ENCODE measurements at regions of chr16 and their contacts with region 1.

Region 1: DNA sequence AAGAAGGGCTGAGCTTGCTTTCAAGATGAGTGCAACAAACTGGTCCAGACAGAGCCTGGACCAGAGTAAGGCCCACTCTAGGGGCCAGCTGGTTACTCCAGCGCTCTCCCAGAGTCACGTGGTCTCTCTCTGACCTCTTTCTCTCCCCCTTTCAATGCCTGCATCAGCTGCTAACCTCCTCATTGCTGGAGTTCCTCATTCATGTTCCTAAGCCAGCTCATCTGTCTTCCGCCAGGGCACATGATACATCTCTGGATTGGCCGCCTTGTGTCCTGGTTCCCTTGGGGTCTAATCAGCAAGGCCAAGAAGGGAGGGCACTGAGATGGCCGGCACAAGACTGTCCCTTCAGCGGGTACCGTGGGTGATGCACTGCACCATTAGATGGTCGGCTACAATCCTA is 26.9 kb upstream of the ZFP90 start:
- DNase-seq: no peak
- ATAC-seq: no peak
- H3K4me3 ChIP-seq: no peak overlapping the region
- H3K27ac ChIP-seq: no peak overlapping the region
- H3K4me1 ChIP-seq: no peaks in the 10 kb centered on the region
- H3K27me3 ChIP-seq: peaks cover 20% of the 10 kb centered on the region
- CTCF ChIP-seq: no peak
- POLR2A ChIP-seq: no peak
- RAD21 ChIP-seq: no peak

Region 2: DNA sequence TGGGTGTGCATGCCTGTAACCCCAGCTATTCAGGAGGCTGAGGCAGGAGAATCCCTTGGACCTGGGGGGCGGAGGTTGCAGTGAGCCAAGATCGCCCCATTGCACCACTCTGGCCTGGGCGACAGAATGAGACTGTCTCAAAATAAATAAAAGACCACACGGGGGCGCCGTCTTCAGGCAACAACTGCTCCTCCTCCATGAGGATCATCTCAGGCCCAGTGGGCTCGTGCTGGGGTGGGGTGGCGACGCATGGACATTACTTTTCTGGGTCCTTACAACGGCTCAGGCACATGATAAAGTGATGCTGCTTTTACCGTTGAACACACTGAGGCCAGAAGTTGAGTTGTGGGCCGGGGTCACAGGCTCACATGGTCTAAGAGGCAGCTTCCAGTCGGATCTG is 145.2 kb before region 1 on chr16:
- CTCF ChIA-PET with region 1: no interaction called
- POLR2A ChIA-PET with region 1: no interaction called
- dilution Hi-C with region 1: no loop called
- in situ Hi-C with region 1: no loop called
- intact Hi-C with region 1: loop called (anchors 1 kb)
- DNase-seq: peak; percentile 9
- ATAC-seq: peak; percentile 36; the same call in 1 of the 2 replicates
- H3K4me3 ChIP-seq: no peak overlapping the region
- H3K27ac ChIP-seq: no peak overlapping the region
- H3K4me1 ChIP-seq: no peaks in the 10 kb centered on the region
- H3K27me3 ChIP-seq: peaks cover 15% of the 10 kb centered on the region
- CTCF ChIP-seq: peak; percentile 47
- POLR2A ChIP-seq: no peak
- RAD21 ChIP-seq: peak; percentile 33

Region 3: DNA sequence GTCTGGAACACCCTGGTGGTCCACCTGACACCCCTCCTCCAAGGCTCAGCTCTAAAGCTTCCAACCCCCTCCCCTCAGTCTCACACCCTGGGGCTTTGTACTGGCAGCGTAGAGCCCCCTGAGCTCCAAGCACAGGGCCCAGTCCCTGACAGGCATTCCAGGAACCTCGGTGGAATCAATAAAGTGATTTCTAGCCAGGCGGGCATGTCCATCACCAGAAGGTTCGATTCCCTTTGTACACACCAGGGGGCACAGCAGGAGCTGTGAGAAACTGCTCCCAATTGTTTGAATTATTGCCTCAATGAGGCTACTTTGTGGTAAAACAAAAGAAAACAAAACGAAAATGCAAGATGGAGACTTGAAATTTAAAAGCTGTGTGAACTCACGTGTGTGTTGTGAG is 115.7 kb before region 1 on chr16:
- CTCF ChIA-PET with region 1: interaction called, 6 read pairs
- POLR2A ChIA-PET with region 1: no interaction called
- dilution Hi-C with region 1: no loop called
- in situ Hi-C with region 1: loop called (anchors 5 kb)
- intact Hi-C with region 1: loop called (anchors 1 kb)
- DNase-seq: peak; percentile 58
- ATAC-seq: peak; percentile 88
- H3K4me3 ChIP-seq: no peak overlapping the region
- H3K27ac ChIP-seq: no peak overlapping the region
- H3K4me1 ChIP-seq: no peaks in the 10 kb centered on the region; the same call in 1 of the 2 replicates
- H3K27me3 ChIP-seq: peaks cover 19% of the 10 kb centered on the region
- CTCF ChIP-seq: peak; percentile 75
- POLR2A ChIP-seq: no peak
- RAD21 ChIP-seq: peak; percentile 70

Region 4: DNA sequence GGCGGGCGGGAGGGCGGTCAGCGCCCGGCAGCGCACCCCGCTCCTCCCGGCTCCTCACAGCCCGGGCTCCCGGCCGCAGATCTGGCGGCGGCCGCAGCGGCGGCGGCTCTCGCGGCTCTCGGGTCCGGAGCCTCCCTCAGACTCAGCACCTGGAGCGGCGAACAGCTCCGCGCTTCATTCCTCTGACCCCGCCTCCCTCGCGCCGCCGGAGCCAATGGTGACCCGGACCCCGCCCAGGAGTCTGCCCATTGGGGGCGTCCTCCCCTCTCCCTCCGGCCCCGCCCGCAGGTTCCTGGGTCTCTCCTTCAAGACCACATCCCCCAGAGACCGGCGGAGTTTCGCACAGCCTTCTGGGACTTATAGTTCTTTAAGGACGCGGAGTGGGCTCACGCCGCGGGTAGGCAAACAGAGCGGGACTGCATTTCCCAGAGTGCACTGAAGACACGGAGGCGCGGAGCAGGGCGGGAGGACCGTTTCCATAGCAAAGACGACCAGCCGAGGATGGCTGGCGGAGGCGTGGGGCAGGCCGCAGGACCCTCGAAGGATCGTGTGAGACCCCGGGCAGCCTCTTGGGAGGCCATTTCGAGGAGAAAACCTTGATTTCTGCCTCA is 63.7 kb before region 1 on chr16 and contains the start of gene SMPD3:
- CTCF ChIA-PET with region 1: interaction called, 4 read pairs
- POLR2A ChIA-PET with region 1: no interaction called
- dilution Hi-C with region 1: no loop called
- in situ Hi-C with region 1: no loop called
- intact Hi-C with region 1: loop called (anchors 2 kb)
- DNase-seq: peak; percentile 97
- ATAC-seq: peak; percentile 99
- H3K4me3 ChIP-seq: peak within 1 kb of the TSS; percentile 30
- H3K27ac ChIP-seq: no peak within 1 kb of the TSS
- H3K4me1 ChIP-seq: peaks cover 7% of the 10 kb centered on the region
- H3K27me3 ChIP-seq: peaks cover 10% of the 10 kb centered on the region
- CTCF ChIP-seq: no peak
- POLR2A ChIP-seq: no peak
- RAD21 ChIP-seq: no peak
- total RNA-seq, gene SMPD3: not detected in 2 replicates